ENCODE measurements at regions of chr5 and their contacts with region 1.

Region 1: DNA sequence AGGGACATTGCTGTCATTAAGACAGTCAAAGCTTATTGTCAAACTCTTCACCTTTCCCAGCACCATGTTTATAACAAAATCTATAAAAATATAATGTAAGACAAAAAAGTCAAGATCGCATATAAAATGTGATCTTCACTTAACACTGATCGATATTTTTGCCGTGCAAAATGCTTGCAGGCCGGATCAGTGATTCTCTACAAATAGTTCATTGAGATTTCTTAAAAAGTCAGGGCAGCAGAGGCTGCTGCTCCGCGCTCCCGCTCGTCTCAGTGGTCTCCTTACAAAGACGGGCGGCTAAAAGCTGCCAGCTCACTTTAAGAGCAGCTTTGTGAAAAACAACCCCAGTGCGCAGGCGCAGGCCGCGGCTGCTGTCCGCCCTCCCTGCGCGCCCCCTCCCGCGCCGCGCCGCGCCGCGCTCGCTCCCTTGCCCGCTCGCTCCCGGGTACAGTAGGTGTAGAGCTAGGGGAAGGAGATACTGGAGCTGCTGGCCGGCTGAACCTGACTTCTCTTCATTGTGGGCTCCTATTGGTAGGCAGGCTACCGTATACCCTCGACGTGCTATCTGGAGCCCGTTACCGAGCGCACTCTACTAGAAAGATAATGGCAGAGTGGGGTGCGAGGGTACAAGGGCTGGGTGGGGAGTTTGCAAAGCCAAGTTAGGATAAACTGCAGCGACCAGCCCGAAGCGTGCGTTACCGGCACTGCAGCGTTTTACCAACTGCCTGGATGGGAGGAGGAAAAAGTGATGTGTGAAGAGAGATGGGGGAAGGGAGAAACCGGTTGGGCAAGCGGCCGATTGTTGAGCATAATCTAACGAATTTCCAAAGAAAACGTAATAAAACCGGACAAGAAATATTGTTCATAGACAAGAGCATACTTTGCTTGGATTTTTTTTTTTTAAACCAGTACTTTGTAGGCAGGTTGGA is at the start of gene ARRDC3:
- DNase-seq: peak; percentile 84

Region 2: GRCh38 chr5:91219803-91220371 is 163.4 kb before region 1 on chr5:
- CTCF ChIA-PET with region 1: interaction called, 15 read pairs
- POLR2A ChIA-PET with region 1: interaction called, 11 read pairs
- DNase-seq: peak; percentile 28

Region 3: DNA sequence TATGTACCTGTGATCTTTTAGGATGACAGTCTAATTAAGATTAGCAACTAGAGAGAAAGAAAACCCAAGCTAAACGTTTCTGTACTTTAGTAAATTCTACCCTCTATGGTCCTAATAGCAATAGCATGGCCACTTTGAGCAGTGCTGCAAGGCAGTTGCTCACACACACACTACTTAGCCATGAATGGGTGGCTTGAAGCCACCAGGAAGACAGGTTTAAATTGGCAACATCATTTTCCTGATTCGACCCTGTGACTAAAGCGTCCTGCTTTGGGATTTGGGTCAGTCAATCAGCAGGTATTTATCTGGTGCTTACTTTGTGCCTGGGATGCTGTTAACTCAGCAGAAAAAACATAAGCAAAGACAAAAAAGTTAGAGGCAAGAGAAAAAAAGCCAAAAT is 150.8 kb before region 1 on chr5:
- CTCF ChIA-PET with region 1: interaction called, 32 read pairs
- POLR2A ChIA-PET with region 1: interaction called, 8 read pairs
- DNase-seq: no peak

Region 4: GRCh38 chr5:91307048-91307447 is 76.2 kb before region 1 on chr5:
- CTCF ChIA-PET with region 1: interaction called, 5 read pairs
- POLR2A ChIA-PET with region 1: interaction called, 12 read pairs
- DNase-seq: no peak

Region 5: GRCh38 chr5:91419571-91420537 is 36.6 kb after region 1 on chr5:
- CTCF ChIA-PET with region 1: interaction called, 10 read pairs
- POLR2A ChIA-PET with region 1: interaction called, 17 read pairs
- DNase-seq: peak; percentile 23

Region 6: DNA sequence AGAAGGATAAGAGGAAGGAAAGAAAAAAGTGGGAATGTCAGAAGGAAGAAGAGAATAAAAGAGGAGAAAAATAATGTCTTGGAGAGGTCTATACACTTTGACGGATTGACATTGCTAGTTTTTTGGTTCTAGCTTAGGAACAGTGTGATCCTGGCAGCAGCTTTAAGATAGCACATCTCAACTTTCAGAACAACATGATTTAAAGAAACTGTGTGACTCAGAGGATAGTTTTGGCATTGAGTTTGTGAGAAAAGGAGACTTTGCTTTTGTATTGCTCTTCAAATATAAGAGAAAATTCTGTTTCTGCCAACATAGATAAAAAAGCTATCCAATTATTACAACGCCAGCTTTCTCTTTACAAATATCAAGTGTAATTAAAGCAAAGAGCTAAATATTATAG is 260.5 kb after region 1 on chr5:
- CTCF ChIA-PET with region 1: no interaction called
- POLR2A ChIA-PET with region 1: no interaction called
- DNase-seq: no peak

Region 7: GRCh38 chr5:91656891-91657290 is 273.6 kb after region 1 on chr5:
- CTCF ChIA-PET with region 1: no interaction called
- POLR2A ChIA-PET with region 1: no interaction called
- DNase-seq: no peak

Measured in HEK293T (cell line).